ENCODE measurements at regions of chr16 and their contacts with region 1.

Region 1: GRCh38 chr16:11783319-11784037 is 13.6 kb downstream of the ZC3H7A start:
- DNase-seq: no peak
- H3K4me3 ChIP-seq: peak overlapping the region; percentile 27
- H3K27ac ChIP-seq: peak overlapping the region; percentile 92
- H3K27me3 ChIP-seq: no peaks in the 10 kb centered on the region
- CTCF ChIP-seq: no peak

Region 2: GRCh38 chr16:11734025-11734652 is 49.3 kb before region 1 on chr16:
- CTCF ChIA-PET with region 1: no interaction called
- POLR2A ChIA-PET with region 1: no interaction called
- DNase-seq: no peak
- H3K4me3 ChIP-seq: no peak overlapping the region
- H3K27ac ChIP-seq: no peak overlapping the region
- H3K27me3 ChIP-seq: no peaks in the 10 kb centered on the region
- CTCF ChIP-seq: no peak

Region 3: DNA sequence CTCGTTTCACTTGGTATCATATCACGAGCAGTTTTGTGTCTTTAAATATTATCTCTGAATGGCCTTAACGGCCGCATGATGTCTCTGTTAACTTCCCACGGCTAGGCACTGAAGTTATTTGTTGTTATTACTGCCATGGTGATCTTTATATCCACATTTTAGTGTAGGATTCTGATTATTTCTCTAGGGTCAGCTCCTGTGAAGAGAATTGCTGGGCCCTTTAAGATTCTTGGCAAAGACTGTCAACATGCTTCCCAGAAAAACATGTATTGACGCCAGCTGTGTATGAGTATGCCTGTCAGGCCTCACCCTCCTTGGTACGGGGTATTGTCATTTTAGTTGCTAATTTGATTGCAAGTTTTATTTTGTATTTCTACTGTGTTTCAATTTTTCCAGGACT is 456.6 kb after region 1 on chr16:
- CTCF ChIA-PET with region 1: no interaction called
- POLR2A ChIA-PET with region 1: interaction called, 10 read pairs
- DNase-seq: no peak
- H3K4me3 ChIP-seq: no peak overlapping the region
- H3K27ac ChIP-seq: no peak overlapping the region
- H3K27me3 ChIP-seq: no peaks in the 10 kb centered on the region
- CTCF ChIP-seq: no peak

Measured in AG04450 (cell line).